ENCODE measurements at regions of chr2 and their contacts with region 1.

Region 1: GRCh38 chr2:221573430-221574230 is 1.5 kb upstream of the EPHA4 start:
- DNase-seq: peak; percentile 82
- H3K4me3 ChIP-seq: peak overlapping the region; percentile 45 to 68 (median 67)
- H3K27ac ChIP-seq: peak overlapping the region; percentile 14
- H3K4me1 ChIP-seq: peaks cover 10% of the 10 kb centered on the region
- H3K27me3 ChIP-seq: peaks cover 3 to 8% of the 10 kb centered on the region in 2 experiments
- CTCF ChIP-seq: peak; percentile 96 to 97
- POLR2A ChIP-seq: no peak

Region 2: GRCh38 chr2:221085341-221085900 is 488.2 kb before region 1 on chr2:
- CTCF ChIA-PET with region 1: interaction called, 4 read pairs
- POLR2A ChIA-PET with region 1: no interaction called
- dilution Hi-C with region 1: no loop called
- intact Hi-C with region 1: loop called (anchors 5 kb)
- DNase-seq: no peak
- H3K4me3 ChIP-seq: no peak overlapping the region
- H3K27ac ChIP-seq: no peak overlapping the region
- H3K4me1 ChIP-seq: peaks cover 12% of the 10 kb centered on the region
- H3K27me3 ChIP-seq: no peaks in the 10 kb centered on the region
- CTCF ChIP-seq: no peak
- POLR2A ChIP-seq: no peak

Region 3: GRCh38 chr2:221235941-221236340 is 337.7 kb before region 1 on chr2:
- CTCF ChIA-PET with region 1: no interaction called
- POLR2A ChIA-PET with region 1: no interaction called
- dilution Hi-C with region 1: no loop called
- intact Hi-C with region 1: loop called (anchors 1 kb)
- DNase-seq: peak; percentile 88
- H3K4me3 ChIP-seq: peak overlapping the region in 1 of 3 experiments; percentile 21
- H3K27ac ChIP-seq: peak overlapping the region; percentile 83
- H3K4me1 ChIP-seq: peaks cover 15% of the 10 kb centered on the region
- H3K27me3 ChIP-seq: no peaks in the 10 kb centered on the region
- CTCF ChIP-seq: no peak
- POLR2A ChIP-seq: no peak

Region 4: DNA sequence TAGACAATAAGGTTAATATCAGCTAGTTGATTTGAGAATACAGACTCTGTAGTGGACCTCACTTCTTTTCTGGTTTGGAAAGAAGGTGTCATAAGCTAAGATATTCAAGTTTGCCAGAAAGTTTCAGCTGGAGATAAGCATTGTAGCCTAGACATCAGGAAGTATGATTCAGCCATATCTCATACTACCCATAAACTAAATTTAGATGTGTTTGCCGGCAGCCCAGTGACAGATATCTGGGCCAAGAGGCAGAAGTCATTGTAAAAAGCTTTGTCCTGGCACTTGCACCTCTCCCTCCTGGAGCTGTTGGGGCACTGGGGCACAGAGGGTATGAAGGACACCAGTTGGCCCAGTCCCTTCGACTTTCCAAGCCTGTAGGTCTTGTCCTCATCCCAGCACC is 129.5 kb before region 1 on chr2:
- CTCF ChIA-PET with region 1: interaction called, 5 read pairs
- POLR2A ChIA-PET with region 1: no interaction called
- dilution Hi-C with region 1: no loop called
- intact Hi-C with region 1: loop called (anchors 1 kb)
- DNase-seq: peak; percentile 92
- H3K4me3 ChIP-seq: no peak overlapping the region
- H3K27ac ChIP-seq: peak overlapping the region; percentile 95
- H3K4me1 ChIP-seq: peaks cover 31% of the 10 kb centered on the region
- H3K27me3 ChIP-seq: no peaks in the 10 kb centered on the region
- CTCF ChIP-seq: no peak
- POLR2A ChIP-seq: no peak

Region 5: DNA sequence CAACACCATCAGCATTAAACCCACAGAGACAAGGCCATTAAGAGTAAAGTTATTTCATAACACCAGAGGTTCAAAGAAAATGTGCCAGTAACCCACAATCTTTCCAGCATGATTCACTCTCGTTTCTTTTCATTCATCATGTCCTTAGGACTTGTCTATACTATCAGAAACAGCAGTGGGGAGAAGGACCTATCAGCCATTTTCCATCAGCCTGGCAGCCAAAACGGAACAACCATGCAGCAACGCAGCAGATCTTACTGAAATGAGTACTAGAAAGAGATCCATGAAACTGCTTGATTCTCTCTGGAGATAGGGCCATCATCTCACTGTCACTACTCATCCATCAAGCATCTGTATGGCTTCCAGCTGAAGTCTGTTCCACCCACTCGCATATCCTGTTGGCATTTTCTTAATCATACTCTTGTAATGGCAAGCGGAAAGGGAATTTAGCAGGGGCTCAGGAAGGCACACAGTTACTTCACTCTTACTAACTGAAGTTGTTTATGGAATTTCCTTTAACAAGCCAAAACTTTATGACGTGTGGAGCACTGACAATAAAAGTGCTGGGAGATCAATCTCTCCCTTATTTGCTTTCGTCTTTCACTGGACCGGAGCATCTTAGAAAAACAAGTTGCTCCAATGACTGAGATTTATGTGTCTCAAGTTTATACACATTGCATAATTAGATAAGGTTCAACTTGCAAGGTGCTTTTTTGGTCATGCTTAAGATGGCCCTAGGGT is 71.2 kb before region 1 on chr2:
- CTCF ChIA-PET with region 1: no interaction called
- POLR2A ChIA-PET with region 1: no interaction called
- dilution Hi-C with region 1: no loop called
- intact Hi-C with region 1: loop called (anchors 1 kb)
- DNase-seq: peak; percentile 86
- H3K4me3 ChIP-seq: peak overlapping the region in 1 of 3 experiments; percentile 43
- H3K27ac ChIP-seq: peak overlapping the region; percentile 86
- H3K4me1 ChIP-seq: peaks cover 39% of the 10 kb centered on the region
- H3K27me3 ChIP-seq: no peaks in the 10 kb centered on the region
- CTCF ChIP-seq: no peak
- POLR2A ChIP-seq: peak; percentile 54

Region 6: GRCh38 chr2:221641181-221641871 is 67.7 kb after region 1 on chr2:
- CTCF ChIA-PET with region 1: no interaction called
- POLR2A ChIA-PET with region 1: no interaction called
- dilution Hi-C with region 1: no loop called
- intact Hi-C with region 1: loop called (anchors 2 kb)
- DNase-seq: peak; percentile 94
- H3K4me3 ChIP-seq: no peak overlapping the region
- H3K27ac ChIP-seq: peak overlapping the region; percentile 53
- H3K4me1 ChIP-seq: peaks cover 13% of the 10 kb centered on the region
- H3K27me3 ChIP-seq: no peaks in the 10 kb centered on the region
- CTCF ChIP-seq: no peak
- POLR2A ChIP-seq: no peak

Measured in endothelial cell of umbilical vein (primary cell).